ENCODE measurements at regions of chr7 and their contacts with region 1.

Region 1: DNA sequence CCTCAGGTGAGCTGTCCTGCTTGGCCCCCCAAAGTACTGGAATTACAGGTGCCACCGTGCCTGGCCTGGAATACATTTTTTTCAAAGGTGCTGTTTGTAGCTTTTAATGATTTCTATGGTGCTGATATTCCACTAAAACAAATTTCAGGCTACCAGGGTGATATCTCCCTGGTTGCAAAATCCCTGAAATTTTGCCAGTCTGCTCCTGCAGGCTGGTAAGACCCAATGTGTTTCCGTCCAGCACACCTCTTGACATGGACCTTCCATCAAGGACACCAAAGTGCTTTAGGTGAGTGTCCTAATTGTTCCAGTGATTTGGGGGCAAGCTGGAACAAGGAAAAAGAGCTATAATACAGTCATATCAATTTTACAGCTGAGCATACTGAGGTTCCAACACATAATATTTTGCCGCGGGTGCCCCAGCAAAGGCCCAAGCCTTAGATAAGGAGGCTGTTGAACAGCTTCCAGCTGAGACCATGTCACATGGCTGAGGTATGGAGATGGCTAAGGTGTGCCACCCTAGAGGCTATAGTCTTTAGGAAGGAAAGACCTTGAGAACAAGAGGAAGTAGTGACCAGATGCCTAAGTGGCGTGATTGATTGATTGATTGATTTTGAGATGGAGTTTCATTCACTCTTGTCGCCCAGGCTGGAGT is 69.9 kb upstream of the KMT2C start:
- DNase-seq: no peak
- ATAC-seq: no peak
- H3K4me3 ChIP-seq: no peak overlapping the region
- H3K4me3 Mint-ChIP-seq: no peak overlapping the region
- H3K27ac ChIP-seq: no peak overlapping the region
- H3K27ac Mint-ChIP-seq: no peak overlapping the region
- H3K4me1 ChIP-seq: no peaks in the 10 kb centered on the region
- H3K4me1 Mint-ChIP-seq: peaks cover 0 to under 1% (median 0%) of the 10 kb centered on the region in 3 donors
- H3K27me3 ChIP-seq: peaks cover 0 to 6% of the 10 kb centered on the region in 2 experiments
- H3K27me3 Mint-ChIP-seq: no peaks in the 10 kb centered on the region

Region 2: DNA sequence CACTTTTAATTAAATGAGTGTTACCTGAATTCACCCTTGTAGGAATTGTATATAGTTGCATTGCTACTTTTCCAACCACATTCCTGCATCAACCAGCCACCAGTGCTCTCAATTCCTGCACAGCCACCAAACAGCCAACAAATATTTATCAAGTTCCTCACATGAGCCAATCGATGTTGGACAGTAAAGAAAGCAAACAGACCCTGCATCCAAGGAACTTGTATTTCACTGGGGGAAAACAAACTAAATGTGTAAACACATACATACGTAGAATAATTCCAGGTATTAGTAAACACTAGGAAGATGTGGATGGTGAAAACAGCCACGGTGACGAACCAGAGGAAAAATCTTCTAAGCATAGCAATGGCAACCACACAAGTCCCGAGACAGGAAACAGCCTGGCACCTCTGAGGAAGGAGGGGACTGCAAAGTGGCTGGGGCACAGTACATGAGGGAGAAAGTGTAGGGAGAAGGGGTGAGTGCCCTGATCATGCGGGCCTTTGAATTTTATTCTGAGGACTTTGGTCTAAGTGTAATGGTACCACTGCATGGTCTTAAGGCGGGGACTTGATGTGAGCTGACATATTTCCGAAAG is 59.0 kb after region 1 on chr7:
- CTCF ChIA-PET with region 1: no interaction called
- POLR2A ChIA-PET with region 1: interaction called in 1 of 2 experiments, 13 read pairs
- DNase-seq: no peak
- ATAC-seq: peak in 2 of 4 experiments; percentile 26 to 38
- H3K4me3 ChIP-seq: no peak overlapping the region
- H3K4me3 Mint-ChIP-seq: no peak overlapping the region
- H3K27ac ChIP-seq: no peak overlapping the region
- H3K27ac Mint-ChIP-seq: no peak overlapping the region
- H3K4me1 ChIP-seq: peaks cover 0 to 7% of the 10 kb centered on the region in 2 experiments
- H3K4me1 Mint-ChIP-seq: peaks cover 9 to 15% (median 12%) of the 10 kb centered on the region in 3 donors
- H3K27me3 ChIP-seq: peaks cover 0 to 12% of the 10 kb centered on the region in 2 experiments
- H3K27me3 Mint-ChIP-seq: peaks cover 8 to 11% of the 10 kb centered on the region in 2 donors

Region 3: GRCh38 chr7:153331427-153331826 is 825.7 kb after region 1 on chr7:
- CTCF ChIA-PET with region 1: no interaction called
- POLR2A ChIA-PET with region 1: no interaction called
- DNase-seq: no peak
- ATAC-seq: no peak
- H3K4me3 ChIP-seq: no peak overlapping the region
- H3K4me3 Mint-ChIP-seq: no peak overlapping the region
- H3K27ac ChIP-seq: no peak overlapping the region
- H3K27ac Mint-ChIP-seq: no peak overlapping the region
- H3K4me1 ChIP-seq: no peaks in the 10 kb centered on the region
- H3K4me1 Mint-ChIP-seq: no peaks in the 10 kb centered on the region
- H3K27me3 ChIP-seq: no peaks in the 10 kb centered on the region
- H3K27me3 Mint-ChIP-seq: peaks cover 0 to 2% of the 10 kb centered on the region in 2 donors